IMR-90 (cell line): ENCODE measurements at regions of chr13 and their contacts with region 1.

Region 1: DNA sequence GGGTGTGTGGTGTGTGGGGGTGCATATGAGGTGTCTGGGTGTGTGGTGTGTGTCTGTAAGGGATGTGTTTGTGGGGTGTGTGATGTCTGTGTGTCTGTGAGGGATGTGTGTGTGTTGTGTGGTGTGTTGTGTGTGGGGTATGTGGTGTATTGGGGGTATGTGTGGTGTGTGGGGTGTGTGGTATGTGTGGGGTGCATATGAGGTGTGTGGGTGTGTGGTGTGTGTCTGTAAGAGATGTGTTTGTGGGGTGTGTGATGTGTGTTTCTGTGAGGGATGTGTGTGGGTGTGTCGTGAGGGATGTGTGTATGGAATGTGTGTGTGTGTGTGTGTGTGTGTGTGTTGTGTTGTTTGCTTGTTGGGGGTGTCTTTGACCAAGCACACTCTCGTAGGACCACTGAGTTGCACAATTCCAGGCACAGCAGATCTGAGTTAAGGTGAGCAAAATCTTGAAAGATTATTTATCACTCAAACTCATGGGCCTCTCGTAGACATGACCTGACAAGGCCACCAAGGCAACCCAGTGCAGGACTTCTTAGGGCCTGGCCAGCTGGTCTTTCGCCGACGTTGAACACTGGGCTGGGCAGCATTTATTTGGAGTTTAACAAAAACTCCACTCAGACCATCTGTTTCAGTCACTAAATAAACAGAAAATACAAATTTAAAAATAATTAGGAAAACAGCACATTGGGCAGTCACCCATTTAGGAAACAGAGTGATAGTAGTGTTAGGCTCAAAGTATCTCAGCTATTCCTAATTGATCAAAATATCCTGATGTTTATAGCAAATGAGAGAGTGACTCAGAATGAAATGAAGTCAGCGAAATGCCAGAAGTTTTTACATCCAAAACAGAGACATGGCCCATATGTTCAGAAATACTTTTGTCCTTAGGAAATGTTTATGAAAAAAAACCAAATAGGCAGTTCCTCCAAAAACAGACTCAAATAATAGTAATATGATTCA is 301.1 kb downstream of the FGF9 start:
- DNase-seq: peak; percentile 96
- ATAC-seq: peak; percentile 82
- H3K4me3 ChIP-seq: no peak overlapping the region
- H3K27ac ChIP-seq: peak overlapping the region; percentile 91
- H3K4me1 ChIP-seq: peaks cover 25% of the 10 kb centered on the region
- H3K27me3 ChIP-seq: no peaks in the 10 kb centered on the region
- CTCF ChIP-seq: no peak
- POLR2A ChIP-seq: no peak
- RAD21 ChIP-seq: no peak

Region 2: DNA sequence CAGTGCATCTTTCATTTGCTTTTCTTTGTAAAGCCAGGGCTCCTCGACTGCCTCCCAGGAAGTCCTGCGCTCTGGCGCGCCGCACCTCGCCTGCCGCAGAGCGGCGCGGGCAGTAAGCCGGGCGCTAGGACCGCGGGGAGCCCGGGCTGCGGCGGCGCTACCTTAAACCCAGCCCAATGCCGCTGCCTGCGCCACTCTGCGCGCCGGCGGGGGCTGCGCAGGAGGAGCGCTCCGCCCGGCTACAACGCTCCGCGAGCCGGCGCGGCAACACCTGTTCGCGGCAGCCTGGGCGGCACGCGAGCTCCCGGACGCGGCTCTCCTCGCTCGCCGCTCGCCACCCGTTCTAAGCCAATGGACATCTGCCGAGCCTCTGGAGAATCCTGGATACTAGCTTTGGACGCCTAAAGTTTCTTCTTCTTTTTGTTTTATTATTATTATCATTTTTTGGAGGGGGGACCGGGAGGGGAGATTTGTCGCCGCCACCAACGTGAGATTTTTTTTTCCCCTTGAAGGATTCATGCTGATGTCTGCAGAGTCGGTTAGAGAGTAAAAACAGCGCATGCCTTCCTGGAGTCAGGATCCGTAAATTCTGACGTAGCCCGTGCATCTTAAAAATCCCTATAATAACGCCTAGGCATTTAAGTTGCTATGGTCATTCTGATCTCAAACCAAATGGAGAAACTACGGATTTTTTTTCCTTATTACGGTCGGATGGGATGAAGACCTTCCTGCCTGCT is 300.9 kb before region 1 on chr13 and contains the start of gene FGF9:
- CTCF ChIA-PET with region 1: interaction called, 3 read pairs
- POLR2A ChIA-PET with region 1: no interaction called
- dilution Hi-C with region 1: no loop called
- in situ Hi-C with region 1: no loop called
- intact Hi-C with region 1: loop called (anchors 5 kb)
- DNase-seq: peak; percentile 79
- ATAC-seq: peak; percentile 68
- H3K4me3 ChIP-seq: peak within 1 kb of the TSS; percentile 61
- H3K27ac ChIP-seq: peak within 1 kb of the TSS; percentile 31
- H3K4me1 ChIP-seq: peaks cover 9% of the 10 kb centered on the region
- H3K27me3 ChIP-seq: peaks cover 34% of the 10 kb centered on the region
- CTCF ChIP-seq: peak; percentile 18; the same call in 1 of the 2 replicates
- POLR2A ChIP-seq: no peak
- RAD21 ChIP-seq: no peak
- total RNA-seq, gene FGF9: under 0.01 TPM in 2 replicates

Region 3: DNA sequence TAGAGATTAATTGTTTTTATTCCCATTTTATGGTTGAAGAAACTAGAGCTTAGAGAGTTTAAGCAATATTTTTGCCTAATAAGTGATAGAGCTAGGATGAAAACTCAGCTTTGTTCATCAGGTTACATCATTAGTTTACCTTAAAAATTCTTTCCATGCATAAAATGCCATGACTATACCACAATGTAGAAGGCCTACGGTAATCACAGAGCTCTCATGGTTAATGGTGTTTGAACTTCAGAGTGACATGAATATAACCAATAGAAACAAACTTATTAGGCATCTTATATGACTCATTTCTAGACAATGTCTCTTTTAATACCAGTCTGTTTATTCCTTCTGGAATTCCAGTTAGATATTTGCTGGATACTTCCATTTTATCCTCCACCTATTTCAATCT is 222.5 kb before region 1 on chr13:
- CTCF ChIA-PET with region 1: no interaction called
- POLR2A ChIA-PET with region 1: no interaction called
- dilution Hi-C with region 1: no loop called
- in situ Hi-C with region 1: no loop called
- intact Hi-C with region 1: loop called (anchors 10 kb)
- DNase-seq: peak; percentile 94
- ATAC-seq: peak; percentile 94
- H3K4me3 ChIP-seq: no peak overlapping the region
- H3K27ac ChIP-seq: peak overlapping the region; percentile 99; the same call in 1 of the 2 replicates
- H3K4me1 ChIP-seq: peaks cover 9% of the 10 kb centered on the region
- H3K27me3 ChIP-seq: no peaks in the 10 kb centered on the region
- CTCF ChIP-seq: no peak
- POLR2A ChIP-seq: no peak
- RAD21 ChIP-seq: no peak

Region 4: GRCh38 chr13:22091222-22091970 is 119.5 kb after region 1 on chr13:
- CTCF ChIA-PET with region 1: no interaction called
- POLR2A ChIA-PET with region 1: no interaction called
- dilution Hi-C with region 1: no loop called
- in situ Hi-C with region 1: no loop called
- intact Hi-C with region 1: loop called (anchors 5 kb)
- DNase-seq: peak; percentile 79
- ATAC-seq: peak; percentile 64
- H3K4me3 ChIP-seq: no peak overlapping the region
- H3K27ac ChIP-seq: peak overlapping the region; percentile 80; the same call in 1 of the 2 replicates
- H3K4me1 ChIP-seq: peaks cover 23% of the 10 kb centered on the region
- H3K27me3 ChIP-seq: peaks cover 2% of the 10 kb centered on the region
- CTCF ChIP-seq: no peak
- POLR2A ChIP-seq: no peak
- RAD21 ChIP-seq: no peak

Region 5: DNA sequence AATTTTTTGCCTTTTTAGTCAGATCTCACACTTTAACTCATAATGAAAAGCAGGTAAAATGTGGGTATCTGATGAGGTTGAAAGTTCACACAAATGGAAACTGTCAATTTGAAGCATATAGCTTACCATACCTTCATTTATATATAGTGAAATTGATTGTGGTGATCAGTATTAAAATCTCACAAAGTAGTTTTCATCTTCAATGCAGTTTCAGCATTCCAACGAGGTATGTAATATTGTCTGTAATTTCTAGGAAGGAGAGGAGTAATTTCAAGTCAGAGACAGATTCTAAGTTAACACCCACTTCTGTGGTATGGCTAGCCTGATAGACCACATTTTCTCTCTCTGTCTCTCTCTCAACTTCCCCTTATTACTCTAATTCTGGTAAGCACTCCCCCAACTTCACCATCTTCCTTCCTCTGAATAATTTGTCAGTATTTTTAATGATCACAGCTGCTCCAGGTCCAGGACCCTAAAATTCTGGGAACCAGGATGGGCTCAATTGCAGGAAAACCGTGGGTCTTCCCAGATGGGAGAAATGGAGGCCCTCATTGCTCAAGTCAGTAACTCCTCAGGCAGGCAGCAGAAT is 154.6 kb after region 1 on chr13:
- CTCF ChIA-PET with region 1: no interaction called
- POLR2A ChIA-PET with region 1: no interaction called
- dilution Hi-C with region 1: no loop called
- in situ Hi-C with region 1: no loop called
- intact Hi-C with region 1: loop called (anchors 5 kb)
- DNase-seq: no peak
- ATAC-seq: no peak
- H3K4me3 ChIP-seq: no peak overlapping the region
- H3K27ac ChIP-seq: peak overlapping the region; percentile 64; the same call in 1 of the 2 replicates
- H3K4me1 ChIP-seq: peaks cover 16% of the 10 kb centered on the region
- H3K27me3 ChIP-seq: no peaks in the 10 kb centered on the region
- CTCF ChIP-seq: no peak
- POLR2A ChIP-seq: no peak
- RAD21 ChIP-seq: no peak

Region 6: GRCh38 chr13:22538400-22538799 is 566.5 kb after region 1 on chr13:
- CTCF ChIA-PET with region 1: no interaction called
- POLR2A ChIA-PET with region 1: no interaction called
- dilution Hi-C with region 1: no loop called
- in situ Hi-C with region 1: no loop called
- intact Hi-C with region 1: no loop called
- DNase-seq: no peak
- ATAC-seq: no peak
- H3K4me3 ChIP-seq: no peak overlapping the region
- H3K27ac ChIP-seq: no peak overlapping the region
- H3K4me1 ChIP-seq: no peaks in the 10 kb centered on the region
- H3K27me3 ChIP-seq: no peaks in the 10 kb centered on the region
- CTCF ChIP-seq: no peak
- POLR2A ChIP-seq: no peak
- RAD21 ChIP-seq: no peak

Region 7: DNA sequence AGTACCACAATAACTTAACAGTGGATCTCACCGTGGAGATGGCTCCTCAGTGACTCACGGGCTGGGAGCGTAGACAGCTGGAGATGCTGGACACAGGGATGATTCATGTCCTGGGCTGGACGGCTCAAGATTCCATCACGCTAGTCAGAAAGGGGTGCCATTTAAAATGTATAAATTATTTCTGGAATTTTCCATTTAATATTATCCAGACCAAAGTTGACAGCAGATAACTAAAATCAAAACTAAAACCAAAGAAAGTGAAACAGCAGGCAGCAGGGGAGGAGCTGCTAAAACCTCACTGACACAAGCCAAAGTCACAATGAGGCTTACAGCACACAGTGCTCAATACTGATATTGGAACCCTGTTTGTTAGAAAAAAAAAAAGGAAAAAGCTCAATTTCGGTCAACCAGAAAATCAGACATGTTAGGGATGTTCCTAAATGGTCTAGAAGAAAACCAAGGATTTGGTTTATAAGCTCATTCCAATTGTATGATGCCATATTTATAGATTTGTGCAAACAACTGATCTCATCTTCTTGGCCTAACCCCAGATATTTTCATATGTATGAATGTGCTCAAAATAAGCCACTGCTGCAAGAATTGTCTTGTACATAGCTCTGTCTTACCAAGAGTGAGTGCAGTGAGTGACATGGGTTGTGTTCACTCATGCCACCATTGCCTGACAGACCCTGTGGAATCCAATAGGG is 1349.7 kb after region 1 on chr13:
- CTCF ChIA-PET with region 1: no interaction called
- POLR2A ChIA-PET with region 1: no interaction called
- dilution Hi-C with region 1: no loop called
- in situ Hi-C with region 1: loop called (anchors 25 kb)
- intact Hi-C with region 1: no loop called
- DNase-seq: peak; percentile 94
- ATAC-seq: peak; percentile 82
- H3K4me3 ChIP-seq: peak overlapping the region; percentile 32; the same call in 1 of the 2 replicates
- H3K27ac ChIP-seq: peak overlapping the region; percentile 97
- H3K4me1 ChIP-seq: peaks cover 20% of the 10 kb centered on the region
- H3K27me3 ChIP-seq: no peaks in the 10 kb centered on the region
- CTCF ChIP-seq: no peak
- POLR2A ChIP-seq: peak; percentile 36; the same call in 1 of the 2 replicates
- RAD21 ChIP-seq: no peak